H1 (cell line): ENCODE measurements at regions of chr2 and their contacts with region 1.

Region 1: GRCh38 chr2:222690564-222691200 is 19.2 kb downstream of the MOGAT1 start:
- DNase-seq: peak; percentile 59 to 92
- H3K4me3 ChIP-seq: no peak overlapping the region
- H3K27ac ChIP-seq: no peak overlapping the region
- H3K4me1 ChIP-seq: no peaks in the 10 kb centered on the region
- H3K27me3 ChIP-seq: no peaks in the 10 kb centered on the region
- CTCF ChIP-seq: peak; percentile 99 to 100 (median 100)
- EP300 ChIP-seq: no peak
- POLR2A ChIP-seq: no peak
- RAD21 ChIP-seq: peak; percentile 88 to 91

Region 2: GRCh38 chr2:222677981-222678380 is 12.7 kb before region 1 on chr2:
- CTCF ChIA-PET with region 1: interaction called, 10 read pairs
- POLR2A ChIA-PET with region 1: no interaction called
- DNase-seq: no peak
- H3K4me3 ChIP-seq: no peak overlapping the region
- H3K27ac ChIP-seq: no peak overlapping the region
- H3K4me1 ChIP-seq: no peaks in the 10 kb centered on the region
- H3K27me3 ChIP-seq: no peaks in the 10 kb centered on the region
- CTCF ChIP-seq: peak in 1 of 3 experiments; percentile 16; a peak in 1 of 4 replicates
- EP300 ChIP-seq: no peak
- POLR2A ChIP-seq: no peak
- RAD21 ChIP-seq: no peak

Region 3: DNA sequence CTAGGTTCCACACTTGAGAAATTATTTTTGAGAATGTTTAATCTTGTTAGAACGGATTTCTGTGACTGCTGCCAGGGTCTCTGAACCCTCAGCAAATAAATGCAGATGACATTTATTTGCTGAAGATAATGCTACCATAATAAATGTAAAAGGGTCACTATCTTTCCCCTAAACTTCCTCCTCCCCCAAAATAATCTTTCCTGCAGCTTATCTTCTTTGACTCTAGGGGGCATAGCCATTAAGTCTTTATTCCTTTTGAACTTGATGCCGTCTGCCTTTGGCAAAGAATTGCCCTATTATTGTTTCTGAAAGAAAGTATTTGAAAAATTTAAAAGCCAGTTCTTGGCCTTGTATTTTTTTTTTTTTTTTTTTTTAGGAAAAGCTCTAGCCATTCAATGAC is 106.6 kb after region 1 on chr2:
- CTCF ChIA-PET with region 1: interaction called, 12 read pairs
- POLR2A ChIA-PET with region 1: no interaction called
- DNase-seq: no peak
- H3K4me3 ChIP-seq: no peak overlapping the region
- H3K27ac ChIP-seq: no peak overlapping the region
- H3K4me1 ChIP-seq: peaks cover 0 to 13% (median 1%) of the 10 kb centered on the region in 4 experiments; a peak in 3 of 7 replicates
- H3K27me3 ChIP-seq: no peaks in the 10 kb centered on the region
- CTCF ChIP-seq: peak in 2 of 3 experiments; percentile 22 to 53; a peak in 2 of 4 replicates
- EP300 ChIP-seq: no peak
- POLR2A ChIP-seq: no peak
- RAD21 ChIP-seq: peak; percentile 40 to 41

Region 4: DNA sequence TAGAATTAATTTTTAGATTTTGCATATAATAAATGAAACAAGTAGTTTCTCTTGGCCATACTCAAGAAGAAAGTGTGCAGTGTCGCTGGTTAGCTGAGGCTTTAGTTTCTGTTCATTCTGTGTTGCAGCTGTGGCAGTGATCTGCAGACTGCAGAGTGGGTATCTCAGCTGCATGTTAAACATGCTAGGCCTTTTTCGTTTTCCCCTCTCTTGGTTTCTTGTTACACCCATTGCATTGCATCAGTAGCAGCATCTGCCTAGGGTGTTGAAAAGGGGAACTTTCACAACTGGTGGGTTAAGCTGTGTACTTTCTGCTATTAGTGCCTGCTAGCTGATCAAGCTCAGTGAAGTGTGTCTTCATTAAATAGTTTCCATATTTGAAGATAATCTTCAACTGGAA is 221.4 kb after region 1 on chr2:
- CTCF ChIA-PET with region 1: interaction called, 10 read pairs
- POLR2A ChIA-PET with region 1: interaction called, 3 read pairs
- DNase-seq: no peak
- H3K4me3 ChIP-seq: no peak overlapping the region
- H3K27ac ChIP-seq: no peak overlapping the region
- H3K4me1 ChIP-seq: peaks cover 3 to 19% (median 13%) of the 10 kb centered on the region in 4 experiments; a peak in 5 of 7 replicates
- H3K27me3 ChIP-seq: no peaks in the 10 kb centered on the region
- CTCF ChIP-seq: no peak
- EP300 ChIP-seq: no peak
- POLR2A ChIP-seq: no peak
- RAD21 ChIP-seq: no peak

Region 5: GRCh38 chr2:222939208-222939856 is 248.7 kb after region 1 on chr2:
- CTCF ChIA-PET with region 1: interaction called, 24 read pairs
- POLR2A ChIA-PET with region 1: no interaction called
- DNase-seq: peak; percentile 59 to 94
- H3K4me3 ChIP-seq: no peak overlapping the region
- H3K27ac ChIP-seq: no peak overlapping the region
- H3K4me1 ChIP-seq: peaks cover 0 to 6% (median 1%) of the 10 kb centered on the region in 4 experiments; a peak in 3 of 7 replicates
- H3K27me3 ChIP-seq: no peaks in the 10 kb centered on the region
- CTCF ChIP-seq: peak; percentile 56 to 99 (median 96)
- EP300 ChIP-seq: no peak
- POLR2A ChIP-seq: no peak
- RAD21 ChIP-seq: peak; percentile 84 to 86

Region 6: DNA sequence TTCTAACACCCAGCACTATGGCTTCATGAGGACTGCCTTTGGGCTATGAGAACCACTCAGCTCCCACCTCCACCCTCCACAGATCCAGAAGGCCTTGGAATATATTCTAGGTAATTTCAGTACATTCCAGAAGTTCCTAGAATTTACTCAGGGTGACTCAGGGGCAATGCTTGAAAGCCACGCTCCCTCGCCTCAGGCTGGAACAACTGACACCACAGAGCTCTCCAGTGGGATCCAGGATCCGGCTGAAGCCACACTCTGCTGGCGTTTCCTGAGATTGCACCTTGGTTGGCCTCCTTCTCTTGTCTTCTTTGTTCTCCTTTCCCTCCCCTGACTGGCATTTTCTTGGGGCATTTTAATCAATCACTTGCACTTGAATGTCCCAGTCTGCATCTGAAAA is 268.7 kb after region 1 on chr2:
- CTCF ChIA-PET with region 1: interaction called, 19 read pairs
- POLR2A ChIA-PET with region 1: no interaction called
- DNase-seq: peak in 1 of 2 experiments; percentile 71
- H3K4me3 ChIP-seq: no peak overlapping the region
- H3K27ac ChIP-seq: no peak overlapping the region
- H3K4me1 ChIP-seq: no peaks in the 10 kb centered on the region; a peak in 1 of 7 replicates
- H3K27me3 ChIP-seq: no peaks in the 10 kb centered on the region
- CTCF ChIP-seq: peak; percentile 5 to 42 (median 38)
- EP300 ChIP-seq: no peak
- POLR2A ChIP-seq: no peak
- RAD21 ChIP-seq: peak; percentile 42 to 53